ENCODE measurements at regions of chr3 and their contacts with region 1.

Region 1: DNA sequence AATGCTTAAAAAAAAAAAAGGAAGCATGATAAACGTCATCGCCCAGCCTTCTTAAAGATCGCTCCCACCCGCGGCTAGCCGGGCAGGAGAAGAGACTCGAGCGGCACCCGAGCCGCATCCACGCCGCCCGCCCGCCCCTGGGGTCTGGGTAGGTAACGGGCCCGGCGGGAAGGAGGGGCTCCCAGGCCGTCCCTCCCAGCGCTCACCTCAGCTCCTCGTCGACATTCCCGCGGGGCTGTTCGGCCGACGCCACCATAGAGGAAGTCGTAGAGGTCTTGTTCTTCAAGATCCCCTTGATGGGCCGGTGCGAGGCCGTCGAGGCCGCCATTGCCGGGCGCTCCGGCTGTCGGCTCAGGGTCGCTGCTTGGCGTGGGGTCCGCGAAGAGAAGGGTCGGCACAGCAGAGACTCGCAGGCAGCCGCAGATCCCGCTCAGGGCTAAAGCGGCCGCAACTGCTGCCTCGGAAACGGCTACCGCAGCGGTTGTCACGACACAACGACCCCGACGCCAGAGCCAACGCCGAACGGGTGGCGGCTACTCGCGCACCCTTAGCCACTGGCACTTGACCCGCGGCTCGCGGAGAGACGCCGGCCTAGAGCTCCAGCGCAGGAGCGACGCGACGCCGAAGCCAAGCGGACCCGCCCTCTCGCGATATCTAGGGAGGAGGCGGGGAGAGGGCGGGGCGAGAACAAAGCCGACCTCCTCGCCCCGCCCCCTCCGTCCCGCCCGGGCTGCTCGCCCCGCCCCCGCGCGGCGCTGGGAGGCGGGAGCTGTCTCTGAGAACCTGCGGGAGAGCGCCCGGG is at the start of gene PPP1R2:
- DNase-seq: peak; percentile 64
- ATAC-seq: peak; percentile 88
- H3K4me3 ChIP-seq: peak within 1 kb of the TSS; percentile 77
- H3K27ac ChIP-seq: peak within 1 kb of the TSS; percentile 60
- H3K4me1 ChIP-seq: peaks cover 15% of the 10 kb centered on the region
- H3K27me3 ChIP-seq: no peaks in the 10 kb centered on the region
- CTCF ChIP-seq: no peak
- EP300 ChIP-seq: no peak
- POLR2A ChIP-seq: peak; percentile 99
- RAD21 ChIP-seq: no peak
- polyA plus RNA-seq, gene PPP1R2: 10.5 to 22.7 TPM

Region 2: DNA sequence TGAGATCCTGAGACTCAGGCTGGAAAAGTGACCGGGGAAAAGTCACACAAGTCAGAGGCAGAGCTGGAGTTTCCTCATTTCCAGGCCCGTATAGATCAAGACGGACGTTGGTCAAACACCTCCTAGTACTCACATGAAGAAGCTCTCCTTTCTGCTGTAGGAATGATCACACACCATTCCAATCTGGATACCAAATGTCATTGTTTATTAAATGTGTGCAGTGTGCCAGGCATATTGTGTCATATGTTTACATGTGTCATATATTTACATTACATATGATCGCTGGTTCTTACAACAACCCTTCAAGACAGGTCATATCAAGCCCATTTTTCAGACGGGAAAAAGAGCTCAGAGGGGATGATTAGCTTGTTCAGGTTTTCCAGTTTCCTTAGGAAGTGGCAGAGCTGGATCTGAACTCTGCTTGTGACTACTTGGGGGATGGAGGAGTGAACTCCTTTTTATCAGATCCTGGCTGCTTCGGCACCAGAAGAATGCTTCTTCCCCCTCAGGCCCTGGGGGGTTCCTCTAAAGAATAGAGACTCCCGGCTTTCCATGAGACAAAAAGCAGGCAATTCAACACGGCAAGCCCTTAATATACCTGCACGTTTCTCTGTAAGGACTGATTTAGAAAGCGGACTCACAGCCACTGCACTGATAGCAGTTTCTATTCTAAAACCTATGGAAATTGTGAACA is 815.3 kb before region 1 on chr3:
- CTCF ChIA-PET with region 1: no interaction called
- POLR2A ChIA-PET with region 1: no interaction called
- RAD21 ChIA-PET with region 1: no interaction called
- SMC1A ChIA-PET with region 1: no interaction called
- in situ Hi-C with region 1: no loop called
- intact Hi-C with region 1: no loop called
- DNase-seq: no peak
- ATAC-seq: no peak
- H3K4me3 ChIP-seq: no peak overlapping the region
- H3K27ac ChIP-seq: no peak overlapping the region
- H3K4me1 ChIP-seq: no peaks in the 10 kb centered on the region
- H3K27me3 ChIP-seq: peaks cover 2% of the 10 kb centered on the region in 2 experiments; a peak in 1 of 4 replicates
- CTCF ChIP-seq: no peak
- EP300 ChIP-seq: no peak
- POLR2A ChIP-seq: no peak
- RAD21 ChIP-seq: no peak

Region 3: DNA sequence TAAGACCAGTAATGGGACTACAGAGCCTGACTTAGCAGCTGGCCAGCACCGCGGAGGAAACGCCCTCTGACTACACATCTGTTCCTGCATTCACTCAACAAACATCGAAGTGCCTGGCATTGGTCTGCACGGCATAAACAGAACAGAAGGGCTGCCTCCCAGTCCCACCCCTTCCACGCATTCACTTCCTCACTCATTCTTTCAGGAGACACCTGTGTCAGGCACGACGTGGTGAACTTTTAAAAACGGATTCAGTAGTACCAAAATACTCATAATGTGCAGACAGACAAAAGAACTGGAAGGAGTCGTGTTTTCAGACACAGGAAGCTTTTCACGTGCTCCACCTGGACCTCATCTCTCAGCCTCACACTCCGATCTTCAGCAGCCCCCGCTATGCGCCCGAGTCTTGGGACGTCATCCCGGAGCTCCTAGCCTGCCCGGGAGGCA is 395.2 kb before region 1 on chr3:
- CTCF ChIA-PET with region 1: no interaction called
- POLR2A ChIA-PET with region 1: no interaction called
- RAD21 ChIA-PET with region 1: interaction called, 3 read pairs
- SMC1A ChIA-PET with region 1: no interaction called
- in situ Hi-C with region 1: loop called (anchors 25 kb)
- intact Hi-C with region 1: no loop called
- DNase-seq: peak; percentile 91
- ATAC-seq: peak; percentile 83
- H3K4me3 ChIP-seq: peak overlapping the region; percentile 93
- H3K27ac ChIP-seq: peak overlapping the region; percentile 91
- H3K4me1 ChIP-seq: peaks cover 46% of the 10 kb centered on the region
- H3K27me3 ChIP-seq: no peaks in the 10 kb centered on the region
- CTCF ChIP-seq: no peak
- EP300 ChIP-seq: no peak
- POLR2A ChIP-seq: peak; percentile 79
- RAD21 ChIP-seq: no peak

Region 4: DNA sequence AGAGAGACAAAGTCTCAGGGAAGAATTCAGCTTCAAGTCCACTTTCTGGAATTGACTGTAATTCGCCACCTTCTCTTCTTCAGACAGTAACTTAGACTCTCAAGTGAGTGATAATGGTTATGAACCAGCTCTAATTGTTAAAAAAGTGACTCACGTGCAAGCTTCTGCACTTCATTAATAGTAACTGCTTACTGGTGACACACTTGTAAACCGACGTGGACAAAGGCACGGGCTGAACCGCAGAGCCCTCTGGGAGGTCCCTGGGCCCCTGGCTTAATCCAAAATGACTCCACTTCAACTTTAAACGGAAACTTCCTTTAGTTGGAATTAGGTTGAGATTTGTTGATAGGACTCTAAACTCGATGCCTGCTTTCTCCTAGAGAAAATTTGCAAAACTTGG is 251.8 kb after region 1 on chr3:
- CTCF ChIA-PET with region 1: no interaction called
- POLR2A ChIA-PET with region 1: no interaction called
- RAD21 ChIA-PET with region 1: no interaction called
- SMC1A ChIA-PET with region 1: no interaction called
- in situ Hi-C with region 1: no loop called
- intact Hi-C with region 1: no loop called
- DNase-seq: no peak
- ATAC-seq: no peak
- H3K4me3 ChIP-seq: no peak overlapping the region
- H3K27ac ChIP-seq: no peak overlapping the region
- H3K4me1 ChIP-seq: no peaks in the 10 kb centered on the region
- H3K27me3 ChIP-seq: no peaks in the 10 kb centered on the region
- CTCF ChIP-seq: no peak
- EP300 ChIP-seq: no peak
- POLR2A ChIP-seq: no peak
- RAD21 ChIP-seq: no peak

Region 5: GRCh38 chr3:195900436-195901375 is 357.8 kb after region 1 on chr3:
- CTCF ChIA-PET with region 1: no interaction called
- POLR2A ChIA-PET with region 1: no interaction called
- RAD21 ChIA-PET with region 1: no interaction called
- SMC1A ChIA-PET with region 1: no interaction called
- in situ Hi-C with region 1: no loop called
- intact Hi-C with region 1: loop called (anchors 5 kb)
- DNase-seq: no peak
- ATAC-seq: peak; percentile 61
- H3K4me3 ChIP-seq: peak overlapping the region; percentile 45; the same call in 1 of the 2 replicates
- H3K27ac ChIP-seq: peak overlapping the region; percentile 63
- H3K4me1 ChIP-seq: peaks cover 62% of the 10 kb centered on the region
- H3K27me3 ChIP-seq: no peaks in the 10 kb centered on the region
- CTCF ChIP-seq: no peak
- EP300 ChIP-seq: no peak
- POLR2A ChIP-seq: peak; percentile 77
- RAD21 ChIP-seq: no peak

Region 6: GRCh38 chr3:196168808-196169391 is 626.0 kb after region 1 on chr3:
- CTCF ChIA-PET with region 1: no interaction called
- POLR2A ChIA-PET with region 1: no interaction called
- RAD21 ChIA-PET with region 1: no interaction called
- SMC1A ChIA-PET with region 1: no interaction called
- in situ Hi-C with region 1: no loop called
- intact Hi-C with region 1: no loop called
- DNase-seq: no peak
- ATAC-seq: no peak
- H3K4me3 ChIP-seq: no peak overlapping the region
- H3K27ac ChIP-seq: no peak overlapping the region
- H3K4me1 ChIP-seq: no peaks in the 10 kb centered on the region
- H3K27me3 ChIP-seq: no peaks in the 10 kb centered on the region
- CTCF ChIP-seq: no peak
- EP300 ChIP-seq: no peak
- POLR2A ChIP-seq: no peak
- RAD21 ChIP-seq: no peak